MCF 10A (cell line): ENCODE measurements at regions of chr20 and their contacts with region 1.

Region 1: GRCh38 chr20:32674362-32674789 is 635 bp upstream of the C20orf203 start:
- DNase-seq: peak; percentile 72
- H3K4me3 Mint-ChIP-seq: no peak overlapping the region
- H3K27ac Mint-ChIP-seq: no peak overlapping the region
- H3K4me1 Mint-ChIP-seq: peaks cover 5% of the 10 kb centered on the region
- H3K27me3 Mint-ChIP-seq: no peaks in the 10 kb centered on the region
- CTCF ChIP-seq: peak; percentile 87

Region 2: DNA sequence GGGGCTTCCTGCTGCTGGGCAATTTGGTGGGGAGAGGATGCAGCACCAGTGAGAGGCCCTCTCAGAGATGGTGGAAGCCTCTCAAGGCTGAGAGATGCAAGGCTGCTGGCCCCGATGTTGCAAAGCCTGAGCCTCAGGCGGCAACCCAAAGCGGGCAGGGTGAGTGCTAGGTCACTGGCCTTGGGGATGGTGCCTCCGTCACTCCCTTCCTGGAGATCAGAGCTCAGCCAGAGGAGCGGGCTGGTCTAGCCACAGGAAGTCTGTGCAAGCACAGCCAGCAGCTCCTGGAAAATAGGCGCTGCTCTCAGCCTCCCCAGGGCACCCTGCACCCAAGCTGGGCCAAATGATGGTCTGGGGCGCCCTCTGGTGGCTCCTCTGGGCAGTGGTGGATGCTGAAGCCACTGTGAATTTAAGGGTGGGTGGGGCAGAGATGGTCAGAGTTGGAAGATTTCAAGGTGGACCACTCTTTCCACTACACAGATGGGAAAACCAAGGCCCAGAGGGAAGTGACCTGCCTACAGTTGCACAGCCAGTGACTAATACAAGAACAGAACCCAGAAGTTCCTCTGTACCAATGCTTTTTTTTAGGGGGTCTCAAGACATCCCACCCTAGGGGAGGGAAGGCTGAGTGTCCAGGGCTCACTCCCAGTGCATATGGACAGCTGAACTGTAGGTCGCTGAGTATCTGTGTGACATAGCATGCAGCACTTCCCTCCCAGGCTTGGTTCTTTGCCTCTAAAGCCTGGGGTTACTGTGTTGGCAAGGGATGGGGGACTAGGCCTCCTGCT is 21.4 kb before region 1 on chr20:
- CTCF ChIA-PET with region 1: interaction called, 20 read pairs
- POLR2A ChIA-PET with region 1: no interaction called
- intact Hi-C with region 1: no loop called
- DNase-seq: peak; percentile 84
- H3K4me3 Mint-ChIP-seq: no peak overlapping the region
- H3K27ac Mint-ChIP-seq: no peak overlapping the region
- H3K4me1 Mint-ChIP-seq: peaks cover 3% of the 10 kb centered on the region
- H3K27me3 Mint-ChIP-seq: no peaks in the 10 kb centered on the region
- CTCF ChIP-seq: peak; percentile 94

Region 3: DNA sequence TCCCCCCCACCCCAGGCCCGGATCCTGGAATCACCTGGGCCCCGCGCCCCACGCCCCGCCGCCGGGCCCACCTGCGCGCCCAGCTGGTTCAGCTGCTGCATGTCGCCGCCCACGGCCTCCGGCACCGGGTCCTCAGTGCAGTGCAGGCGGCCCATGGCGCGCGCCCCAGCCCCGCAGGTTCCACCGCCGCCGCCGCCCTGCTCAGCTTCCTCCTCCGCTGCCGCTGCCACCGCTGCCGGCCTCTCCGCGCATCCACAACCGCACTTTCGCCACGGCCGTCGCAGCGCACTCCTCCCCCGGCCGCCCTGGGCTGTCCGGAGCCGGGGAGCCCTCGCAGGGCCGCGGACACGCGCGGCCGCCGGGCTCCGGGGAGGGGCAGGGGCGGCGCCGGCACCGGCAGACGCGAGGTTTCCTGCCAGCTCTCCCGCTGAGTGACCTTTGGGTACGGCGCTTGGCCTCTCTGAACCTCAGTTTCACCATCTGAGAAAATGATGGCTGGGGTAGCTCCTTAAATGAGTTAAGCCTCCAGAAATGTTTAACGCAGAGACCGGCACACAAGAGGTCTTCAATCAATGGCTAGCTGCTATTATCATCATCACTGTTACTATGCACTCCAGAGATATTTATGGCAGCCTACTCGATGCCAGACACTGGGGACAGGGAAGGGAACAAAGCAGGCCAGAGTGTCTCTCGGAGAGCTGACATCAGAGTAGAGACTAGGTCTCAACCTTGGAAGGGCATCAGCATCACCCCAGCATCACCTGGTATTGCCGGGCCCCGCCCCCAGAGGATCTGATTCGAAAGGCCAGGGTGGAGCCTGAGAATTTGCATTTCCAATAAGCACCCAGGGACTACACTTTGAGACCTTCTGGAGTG is 69.1 kb after region 1 on chr20 and contains the start of gene COMMD7:
- CTCF ChIA-PET with region 1: interaction called, 4 read pairs
- POLR2A ChIA-PET with region 1: interaction called, 3 read pairs
- intact Hi-C with region 1: loop called (anchors 1 kb)
- DNase-seq: peak; percentile 29
- H3K4me3 Mint-ChIP-seq: peak within 1 kb of the TSS; percentile 82
- H3K27ac Mint-ChIP-seq: peak within 1 kb of the TSS; percentile 91
- H3K4me1 Mint-ChIP-seq: peaks cover 6% of the 10 kb centered on the region
- H3K27me3 Mint-ChIP-seq: no peaks in the 10 kb centered on the region
- CTCF ChIP-seq: no peak
- total RNA-seq, gene COMMD7: 24.1 and 28.3 TPM in 2 replicates

Region 4: GRCh38 chr20:32762149-32762753 is 87.9 kb after region 1 on chr20 and contains the start of gene DNMT3B:
- CTCF ChIA-PET with region 1: interaction called, 9 read pairs
- POLR2A ChIA-PET with region 1: interaction called, 3 read pairs
- intact Hi-C with region 1: loop called (anchors 5 kb)
- DNase-seq: peak; percentile 65
- H3K4me3 Mint-ChIP-seq: peak within 1 kb of the TSS; percentile 85
- H3K27ac Mint-ChIP-seq: peak within 1 kb of the TSS; percentile 63
- H3K4me1 Mint-ChIP-seq: no peaks in the 10 kb centered on the region
- H3K27me3 Mint-ChIP-seq: no peaks in the 10 kb centered on the region
- CTCF ChIP-seq: peak; percentile 6
- total RNA-seq, gene DNMT3B: 1.3 and 2.0 TPM in 2 replicates

Region 5: DNA sequence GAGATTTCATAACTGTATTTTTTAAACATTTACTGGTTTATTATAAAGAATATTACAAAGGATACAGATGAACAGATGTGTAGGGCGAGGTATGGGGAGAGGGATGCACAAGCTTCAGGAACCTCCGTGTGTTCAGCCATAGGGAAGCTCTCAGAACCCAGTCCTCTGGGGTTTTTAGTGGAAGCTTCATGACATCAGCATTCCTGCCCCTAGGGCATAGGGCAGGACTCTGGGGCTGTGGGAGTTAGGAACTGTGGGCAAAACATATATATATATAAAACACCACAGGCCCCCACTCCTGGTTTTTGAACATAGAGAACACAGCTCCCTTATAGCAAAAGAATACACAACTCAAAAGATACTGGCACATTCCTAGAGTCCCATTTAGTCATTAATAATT is 206.3 kb after region 1 on chr20:
- CTCF ChIA-PET with region 1: interaction called, 11 read pairs
- POLR2A ChIA-PET with region 1: no interaction called
- intact Hi-C with region 1: no loop called
- DNase-seq: no peak
- H3K4me3 Mint-ChIP-seq: no peak overlapping the region
- H3K27ac Mint-ChIP-seq: no peak overlapping the region
- H3K4me1 Mint-ChIP-seq: no peaks in the 10 kb centered on the region
- H3K27me3 Mint-ChIP-seq: no peaks in the 10 kb centered on the region
- CTCF ChIP-seq: no peak

Region 6: DNA sequence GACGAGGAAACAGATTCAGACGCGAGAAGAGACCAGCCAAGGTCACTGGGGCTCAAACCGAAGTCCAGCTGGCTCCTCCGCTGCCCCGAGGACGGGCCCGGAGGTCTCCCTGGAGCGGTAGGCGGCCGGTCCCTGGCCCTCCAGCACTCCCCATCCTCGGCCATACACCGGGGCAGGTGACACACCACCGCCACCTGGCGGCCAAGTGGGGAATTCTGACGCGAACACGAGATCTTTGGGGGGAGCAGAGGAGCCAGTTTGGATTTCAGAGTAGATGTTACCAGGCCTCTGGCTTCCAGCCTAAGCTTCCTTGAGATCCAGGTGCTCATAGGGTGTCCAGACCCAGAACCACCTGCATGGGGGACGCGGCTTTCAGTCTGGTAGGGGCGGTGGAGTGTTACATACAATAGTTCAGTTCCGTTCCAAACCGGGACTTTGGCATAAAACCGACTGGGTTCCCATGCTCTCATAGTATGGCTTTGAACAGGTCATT is 624.8 kb after region 1 on chr20:
- CTCF ChIA-PET with region 1: no interaction called
- POLR2A ChIA-PET with region 1: no interaction called
- intact Hi-C with region 1: loop called (anchors 10 kb)
- DNase-seq: peak; percentile 64
- H3K4me3 Mint-ChIP-seq: no peak overlapping the region
- H3K27ac Mint-ChIP-seq: no peak overlapping the region
- H3K4me1 Mint-ChIP-seq: no peaks in the 10 kb centered on the region
- H3K27me3 Mint-ChIP-seq: peaks cover 68% of the 10 kb centered on the region
- CTCF ChIP-seq: peak; percentile 96